ENCODE measurements at regions of chr3 and their contacts with region 1.

Region 1: GRCh38 chr3:124576565-124577493 is 153.4 kb upstream of the UMPS start:
- DNase-seq: peak; percentile 30
- ATAC-seq: peak; percentile 84
- H3K4me3 ChIP-seq: no peak overlapping the region
- H3K27ac ChIP-seq: no peak overlapping the region
- H3K4me1 ChIP-seq: peaks cover 32% of the 10 kb centered on the region
- H3K27me3 ChIP-seq: no peaks in the 10 kb centered on the region
- CTCF ChIP-seq: peak; percentile 11 to 43 (median 43); a peak in 4 of 6 replicates
- EP300 ChIP-seq: peak in 1 of 2 experiments; percentile 56; a peak in 1 of 4 replicates
- POLR2A ChIP-seq: no peak
- RAD21 ChIP-seq: peak; percentile 19; the same call in 1 of the 2 replicates

Region 2: GRCh38 chr3:124592621-124593441 is 16.0 kb after region 1 on chr3:
- CTCF ChIA-PET with region 1: interaction called, 10 read pairs
- POLR2A ChIA-PET with region 1: interaction called, 7 read pairs
- RAD21 ChIA-PET with region 1: interaction called, 21 read pairs
- SMC1A ChIA-PET with region 1: interaction called, 21 read pairs
- in situ Hi-C with region 1: no loop called
- intact Hi-C with region 1: no loop called
- DNase-seq: peak; percentile 70
- ATAC-seq: peak; percentile 91
- H3K4me3 ChIP-seq: peak overlapping the region; percentile 7; the same call in 1 of the 2 replicates
- H3K27ac ChIP-seq: peak overlapping the region; percentile 67
- H3K4me1 ChIP-seq: peaks cover 22% of the 10 kb centered on the region
- H3K27me3 ChIP-seq: no peaks in the 10 kb centered on the region
- CTCF ChIP-seq: no peak
- EP300 ChIP-seq: peak; percentile 11 to 14; a peak in 2 of 4 replicates
- POLR2A ChIP-seq: no peak
- RAD21 ChIP-seq: 0 out of 2 replicates have a peak, but pooled peaks have one; percentile 4

Region 3: DNA sequence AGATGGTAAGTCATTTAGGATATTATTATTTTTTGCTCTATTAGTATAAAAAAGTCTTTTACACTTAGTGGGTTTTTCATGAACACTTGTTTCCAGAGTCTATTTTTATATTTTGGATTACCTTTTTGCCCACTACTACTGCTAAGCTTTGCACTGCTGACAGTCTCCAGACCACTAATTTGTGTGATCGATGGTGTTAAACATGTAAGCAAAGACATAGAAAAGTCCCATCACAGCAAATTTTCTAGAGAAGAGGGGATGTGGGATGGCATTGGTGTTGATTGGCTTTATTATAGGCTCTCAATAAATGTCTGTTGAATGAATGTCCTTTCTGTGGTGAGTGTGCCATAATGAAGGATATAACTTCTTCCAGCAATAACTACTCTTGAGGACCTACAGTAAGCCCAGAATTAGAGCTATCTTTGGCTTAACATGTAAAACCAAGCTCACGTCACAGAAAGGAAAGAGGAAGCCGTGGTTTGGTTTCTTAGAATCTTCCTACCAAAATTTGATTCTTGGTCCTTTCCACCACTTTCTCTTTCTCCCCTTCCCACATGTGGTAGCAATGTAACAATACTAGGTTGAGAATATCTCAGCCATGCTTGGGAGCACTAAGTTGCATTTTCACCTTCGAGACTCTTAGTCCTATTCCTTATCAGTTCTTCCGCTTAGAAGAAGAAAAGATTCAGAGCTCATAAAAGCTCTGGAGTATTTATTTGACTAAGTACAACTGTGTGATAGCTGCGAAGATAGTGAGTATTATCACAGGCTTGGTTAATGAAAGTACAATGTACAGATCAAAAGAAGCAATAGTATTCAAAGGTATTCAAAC is 62.8 kb after region 1 on chr3:
- CTCF ChIA-PET with region 1: interaction called, 4 read pairs
- POLR2A ChIA-PET with region 1: interaction called, 7 read pairs
- RAD21 ChIA-PET with region 1: interaction called, 12 read pairs
- SMC1A ChIA-PET with region 1: interaction called, 17 read pairs
- in situ Hi-C with region 1: no loop called
- intact Hi-C with region 1: no loop called
- DNase-seq: peak; percentile 77
- ATAC-seq: peak; percentile 81
- H3K4me3 ChIP-seq: no peak overlapping the region; the same call in 1 of the 2 replicates
- H3K27ac ChIP-seq: peak overlapping the region; percentile 40
- H3K4me1 ChIP-seq: peaks cover 23% of the 10 kb centered on the region
- H3K27me3 ChIP-seq: no peaks in the 10 kb centered on the region
- CTCF ChIP-seq: no peak
- EP300 ChIP-seq: peak in 1 of 2 experiments; percentile 47; a peak in 2 of 4 replicates
- POLR2A ChIP-seq: no peak
- RAD21 ChIP-seq: no peak

Measured in GM12878 (cell line).